Dendritic cell treated with granulocyte-macrophage colony-stimulating factor and Interleukin-4, amounts not matched to agents 40 ng/mL and 50 ng/mL, for 4 days (primary cell): ENCODE measurements at regions of chrX and their contacts with region 1.

Region 1: DNA sequence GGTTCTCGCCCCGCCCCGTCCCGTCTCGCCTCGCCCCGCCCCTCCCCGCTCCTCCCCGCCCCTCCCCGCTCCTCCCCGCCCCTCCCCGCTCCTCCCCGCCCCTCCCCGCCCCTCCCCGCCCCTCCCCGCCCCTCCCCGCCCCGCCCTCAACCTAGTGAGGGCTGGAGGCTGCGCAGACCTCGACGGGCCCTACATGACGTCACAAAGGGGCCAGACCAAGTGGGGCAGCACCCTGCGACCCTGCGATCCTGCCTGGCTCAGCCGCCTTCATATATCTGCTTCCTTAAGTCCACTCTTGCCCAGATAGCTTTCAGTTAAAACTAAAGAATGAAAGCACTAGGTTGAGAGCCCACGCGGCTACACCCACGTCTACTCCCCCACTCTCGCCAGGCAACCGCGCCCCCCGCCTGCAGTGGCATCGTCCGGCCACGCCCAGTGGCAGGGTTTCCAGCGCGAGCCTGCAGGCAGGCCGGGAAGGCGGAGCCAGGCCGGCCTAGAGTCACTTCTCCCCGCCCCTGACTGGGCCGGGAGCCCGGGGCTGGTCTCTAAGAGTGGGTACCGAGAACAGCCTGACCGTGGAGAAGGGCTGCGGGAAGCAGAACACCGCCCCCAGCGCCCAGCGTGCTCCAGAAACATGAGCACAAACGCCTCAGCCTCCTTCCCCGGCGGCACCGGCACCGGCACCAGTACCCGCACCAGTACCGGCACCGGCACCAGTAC is 1.5 kb upstream of the MAOA start:
- H3K4me3 Mint-ChIP-seq: peak overlapping the region; percentile 98
- H3K27ac Mint-ChIP-seq: peak overlapping the region; percentile 98
- H3K4me1 Mint-ChIP-seq: peaks cover 11% of the 10 kb centered on the region
- H3K27me3 Mint-ChIP-seq: no peaks in the 10 kb centered on the region

Region 2: GRCh38 chrX:41923257-41923969 is 1731.2 kb before region 1 on chrX and contains the start of gene CASK:
- intact Hi-C with region 1: loop called (anchors 10 kb)
- H3K4me3 Mint-ChIP-seq: peak within 1 kb of the TSS; percentile 87
- H3K27ac Mint-ChIP-seq: peak within 1 kb of the TSS; percentile 73
- H3K4me1 Mint-ChIP-seq: peaks cover 9% of the 10 kb centered on the region
- H3K27me3 Mint-ChIP-seq: peaks cover 10% of the 10 kb centered on the region

Region 3: GRCh38 chrX:43557792-43558191 is 96.8 kb before region 1 on chrX:
- intact Hi-C with region 1: loop called (anchors 5 kb)
- H3K4me3 Mint-ChIP-seq: no peak overlapping the region
- H3K27ac Mint-ChIP-seq: no peak overlapping the region
- H3K4me1 Mint-ChIP-seq: peaks cover 12% of the 10 kb centered on the region
- H3K27me3 Mint-ChIP-seq: no peaks in the 10 kb centered on the region

Region 4: DNA sequence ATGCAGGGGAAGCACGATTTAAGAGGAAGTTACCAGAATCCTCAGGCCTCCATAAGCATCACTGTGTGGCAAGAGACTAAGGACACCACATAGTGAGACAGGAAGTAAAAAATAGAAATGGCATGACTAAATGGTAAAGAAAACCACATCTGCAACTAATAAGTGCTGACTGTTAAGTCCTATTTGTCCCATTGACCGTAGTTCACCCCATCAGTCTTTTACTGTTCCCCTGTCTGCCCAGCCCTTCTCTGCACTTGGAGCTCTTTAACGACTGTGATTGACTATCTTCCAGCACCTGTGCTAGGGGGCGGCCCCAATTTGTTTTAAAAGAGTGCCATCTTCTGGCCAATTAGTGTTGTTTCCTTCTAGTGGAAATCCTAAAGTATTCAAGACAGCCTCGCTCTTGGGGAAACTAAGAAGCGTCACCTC is 95.7 kb after region 1 on chrX:
- intact Hi-C with region 1: loop called (anchors 5 kb)
- H3K4me3 Mint-ChIP-seq: no peak overlapping the region
- H3K27ac Mint-ChIP-seq: peak overlapping the region; percentile 69
- H3K4me1 Mint-ChIP-seq: peaks cover 16% of the 10 kb centered on the region
- H3K27me3 Mint-ChIP-seq: no peaks in the 10 kb centered on the region